ENCODE measurements at regions of chr10 and their contacts with region 1.

Region 1: DNA sequence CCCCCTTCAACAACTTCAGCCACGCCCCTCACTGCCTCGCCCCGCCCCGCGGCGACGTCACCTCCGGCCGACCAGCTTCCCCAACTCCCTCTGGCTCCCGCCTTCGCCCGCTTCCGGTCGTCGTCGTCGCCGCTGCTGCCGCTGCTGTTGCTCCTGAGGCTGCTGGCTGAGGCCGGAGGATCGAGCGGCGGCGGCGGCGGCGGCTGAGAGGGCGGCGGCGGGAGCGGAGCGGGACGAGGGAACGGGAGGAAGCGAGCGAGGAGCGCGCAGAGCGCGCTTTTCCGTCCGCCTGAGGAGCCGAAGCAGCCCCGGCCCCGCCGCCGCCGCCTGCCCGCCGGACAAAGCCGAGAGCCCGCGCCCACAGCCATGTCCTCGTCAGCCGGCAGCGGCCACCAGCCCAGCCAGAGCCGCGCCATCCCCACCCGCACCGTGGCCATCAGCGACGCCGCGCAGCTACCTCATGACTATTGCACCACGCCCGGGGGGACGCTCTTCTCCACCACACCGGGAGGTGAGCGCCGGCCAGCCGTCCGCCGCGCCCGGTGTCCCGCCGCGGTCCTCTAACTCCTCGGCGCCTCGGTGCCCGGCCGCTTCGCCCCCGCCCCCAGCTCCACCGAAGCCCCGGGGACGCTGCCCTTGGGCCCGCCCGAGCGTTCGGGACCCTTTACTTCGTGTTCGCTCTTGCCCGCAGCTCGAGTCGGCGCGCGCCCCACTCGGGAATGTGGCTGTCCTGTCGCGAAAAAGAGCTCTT is at the start of gene EIF4EBP2:
- DNase-seq: peak; percentile 95 to 100 (median 98)
- ATAC-seq: peak; percentile 98
- H3K4me3 ChIP-seq: peak within 1 kb of the TSS; percentile 82
- H3K4me3 Mint-ChIP-seq: peak within 1 kb of the TSS; percentile 91 to 99 (median 96)
- H3K27ac ChIP-seq: peak within 1 kb of the TSS; percentile 86
- H3K27ac Mint-ChIP-seq: peak within 1 kb of the TSS; percentile 88 to 97 (median 94)
- H3K4me1 ChIP-seq: peaks cover 13 to 24% of the 10 kb centered on the region in 2 donors
- H3K4me1 Mint-ChIP-seq: peaks cover 30 to 53% (median 44%) of the 10 kb centered on the region in 7 donors
- H3K27me3 ChIP-seq: no peaks in the 10 kb centered on the region
- H3K27me3 Mint-ChIP-seq: peaks cover 0 to 3% (median 0%) of the 10 kb centered on the region in 5 donors
- total RNA-seq, gene EIF4EBP2: 33.5 to 52.1 (median 45.2) TPM

Region 2: GRCh38 chr10:69327463-69328379 is 1076.5 kb before region 1 on chr10:
- CTCF ChIA-PET with region 1: no interaction called
- POLR2A ChIA-PET with region 1: no interaction called
- intact Hi-C with region 1: loop called in 1 of 2 experiments (anchors 10 kb)
- DNase-seq: peak in 5 of 9 donors; percentile 30 to 42 (median 35)
- ATAC-seq: peak; percentile 90
- H3K4me3 ChIP-seq: peak overlapping the region; percentile 32
- H3K4me3 Mint-ChIP-seq: peak overlapping the region; percentile 76 to 90 (median 82)
- H3K27ac ChIP-seq: peak overlapping the region; percentile 65
- H3K27ac Mint-ChIP-seq: peak overlapping the region; percentile 68 to 96 (median 89)
- H3K4me1 ChIP-seq: peaks cover 16 to 18% of the 10 kb centered on the region in 2 donors
- H3K4me1 Mint-ChIP-seq: peaks cover 46 to 93% (median 73%) of the 10 kb centered on the region in 7 donors
- H3K27me3 ChIP-seq: no peaks in the 10 kb centered on the region
- H3K27me3 Mint-ChIP-seq: no peaks in the 10 kb centered on the region

Region 3: GRCh38 chr10:70169649-70170364 is 234.4 kb before region 1 on chr10:
- CTCF ChIA-PET with region 1: no interaction called
- POLR2A ChIA-PET with region 1: interaction called, 8 read pairs
- intact Hi-C with region 1: loop called (anchors 1 kb)
- DNase-seq: peak in 2 of 9 donors; percentile 8 to 30
- ATAC-seq: peak; percentile 18
- H3K4me3 ChIP-seq: peak overlapping the region; percentile 88
- H3K4me3 Mint-ChIP-seq: peak overlapping the region; percentile 86 to 97 (median 94)
- H3K27ac ChIP-seq: peak overlapping the region; percentile 95
- H3K27ac Mint-ChIP-seq: peak overlapping the region; percentile 83 to 98 (median 96)
- H3K4me1 ChIP-seq: peaks cover 47 to 49% of the 10 kb centered on the region in 2 donors
- H3K4me1 Mint-ChIP-seq: peaks cover 46 to 70% (median 65%) of the 10 kb centered on the region in 7 donors
- H3K27me3 ChIP-seq: no peaks in the 10 kb centered on the region
- H3K27me3 Mint-ChIP-seq: no peaks in the 10 kb centered on the region

Region 4: GRCh38 chr10:70363971-70364771 is 40.0 kb before region 1 on chr10:
- CTCF ChIA-PET with region 1: interaction called, 3 read pairs
- POLR2A ChIA-PET with region 1: no interaction called
- intact Hi-C with region 1: loop called (anchors 2 to 5 kb)
- DNase-seq: peak; percentile 62 to 83 (median 77)
- ATAC-seq: peak; percentile 98
- H3K4me3 ChIP-seq: no peak overlapping the region
- H3K4me3 Mint-ChIP-seq: peak overlapping the region in 5 of 10 donors; percentile 23 to 71 (median 42)
- H3K27ac ChIP-seq: no peak overlapping the region
- H3K27ac Mint-ChIP-seq: peak overlapping the region in 4 of 9 donors; percentile 25 to 50 (median 36)
- H3K4me1 ChIP-seq: peaks cover 0 to 6% of the 10 kb centered on the region in 2 donors
- H3K4me1 Mint-ChIP-seq: peaks cover 7 to 12% (median 9%) of the 10 kb centered on the region in 7 donors
- H3K27me3 ChIP-seq: no peaks in the 10 kb centered on the region
- H3K27me3 Mint-ChIP-seq: peaks cover 0 to 3% (median 0%) of the 10 kb centered on the region in 5 donors

Region 5: DNA sequence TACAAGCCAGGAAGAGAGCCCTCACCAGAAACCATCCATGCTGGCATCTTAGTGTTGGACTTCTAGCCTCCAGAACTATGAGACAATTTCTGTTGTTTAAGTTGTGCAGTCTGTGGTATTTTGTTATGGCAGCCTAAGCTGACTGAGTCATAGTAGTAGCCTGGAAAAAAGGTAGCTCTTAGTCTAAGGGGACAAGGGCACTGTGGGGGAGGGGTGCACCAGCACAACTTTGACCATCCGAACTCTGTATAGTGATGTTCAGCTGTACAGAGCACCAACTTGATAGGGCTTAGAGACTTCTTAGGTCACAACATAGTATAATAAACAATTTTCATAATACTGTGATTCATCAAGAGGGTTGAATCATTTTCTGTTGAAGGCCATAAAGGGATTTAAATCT is 14.0 kb after region 1 on chr10:
- CTCF ChIA-PET with region 1: interaction called, 3 read pairs
- POLR2A ChIA-PET with region 1: interaction called, 13 read pairs
- intact Hi-C with region 1: loop called in 1 of 2 experiments (anchors 2 kb)
- DNase-seq: no peak
- ATAC-seq: no peak
- H3K4me3 ChIP-seq: no peak overlapping the region
- H3K4me3 Mint-ChIP-seq: no peak overlapping the region
- H3K27ac ChIP-seq: no peak overlapping the region
- H3K27ac Mint-ChIP-seq: peak overlapping the region in 7 of 9 donors; percentile 8 to 84 (median 37)
- H3K4me1 ChIP-seq: no peaks in the 10 kb centered on the region
- H3K4me1 Mint-ChIP-seq: peaks cover 19 to 34% (median 31%) of the 10 kb centered on the region in 7 donors
- H3K27me3 ChIP-seq: no peaks in the 10 kb centered on the region
- H3K27me3 Mint-ChIP-seq: no peaks in the 10 kb centered on the region

Region 6: DNA sequence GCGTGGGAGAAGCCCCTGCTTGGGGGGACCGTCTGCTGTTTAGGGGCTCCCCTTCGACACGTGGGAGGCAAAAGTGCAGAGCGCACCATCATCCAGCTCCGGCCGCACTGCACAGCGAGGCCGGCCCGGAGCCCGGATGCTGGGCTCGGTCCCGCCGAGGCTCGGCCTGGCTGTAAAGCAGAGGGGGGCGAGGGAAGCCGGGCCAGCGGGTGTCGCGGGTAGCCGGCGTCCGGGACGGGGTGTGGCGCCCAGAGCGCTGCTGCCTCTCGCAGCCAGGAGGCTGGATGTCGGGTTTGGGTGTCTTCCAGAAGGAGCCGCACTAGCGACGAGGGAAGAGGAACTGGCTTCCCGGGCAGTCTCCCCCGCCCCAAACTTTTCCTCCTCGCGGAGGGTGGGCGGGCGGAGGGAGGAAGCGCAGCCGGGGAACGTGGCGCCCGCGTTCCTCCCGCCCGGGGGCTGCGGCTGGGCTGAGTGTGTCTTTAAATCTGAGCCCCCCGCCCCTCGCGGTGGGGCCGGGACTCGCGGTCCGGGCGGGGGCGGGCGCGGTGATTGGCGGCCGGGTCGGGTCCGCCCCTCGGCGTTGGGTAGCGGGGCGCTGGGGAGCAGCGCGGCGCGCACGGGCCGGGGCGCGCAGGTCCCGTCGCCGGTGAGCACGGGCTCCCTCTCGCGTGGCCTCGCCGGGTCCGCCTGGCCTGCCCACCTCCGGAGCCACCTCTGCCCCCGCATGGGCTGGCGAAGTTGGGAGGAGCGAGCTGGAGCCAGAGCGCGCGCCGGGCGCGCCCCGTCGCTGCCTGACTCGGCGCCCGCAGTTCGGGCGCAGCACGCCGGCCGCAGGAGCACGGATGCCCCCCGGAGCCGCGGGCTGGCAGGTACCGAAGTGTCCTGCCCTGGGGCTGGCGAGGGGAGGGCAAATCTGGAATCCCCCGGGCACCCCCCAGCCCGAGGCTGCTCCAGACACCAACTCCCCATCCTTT is 74.3 kb after region 1 on chr10 and contains the start of gene PALD1:
- CTCF ChIA-PET with region 1: interaction called, 3 read pairs
- POLR2A ChIA-PET with region 1: interaction called, 7 read pairs
- intact Hi-C with region 1: loop called in 1 of 2 experiments (anchors 1 kb)
- DNase-seq: peak in 5 of 9 donors; percentile 13 to 71 (median 24)
- ATAC-seq: no peak
- H3K4me3 ChIP-seq: peak within 1 kb of the TSS; percentile 56
- H3K4me3 Mint-ChIP-seq: peak within 1 kb of the TSS; percentile 78 to 90 (median 84)
- H3K27ac ChIP-seq: peak within 1 kb of the TSS; percentile 33
- H3K27ac Mint-ChIP-seq: peak within 1 kb of the TSS; percentile 56 to 93 (median 75)
- H3K4me1 ChIP-seq: peaks cover 29 to 51% of the 10 kb centered on the region in 2 donors
- H3K4me1 Mint-ChIP-seq: peaks cover 28 to 65% (median 56%) of the 10 kb centered on the region in 7 donors
- H3K27me3 ChIP-seq: peaks cover 0 to 4% of the 10 kb centered on the region in 2 donors
- H3K27me3 Mint-ChIP-seq: peaks cover 0 to 74% (median 0%) of the 10 kb centered on the region in 5 donors
- total RNA-seq, gene PALD1: 0.08 to 0.39 (median 0.19) TPM

Region 7: GRCh38 chr10:70887804-70888800 is 483.9 kb after region 1 on chr10 and contains the start of gene PCBD1:
- CTCF ChIA-PET with region 1: no interaction called
- POLR2A ChIA-PET with region 1: no interaction called
- intact Hi-C with region 1: loop called (anchors 1 to 10 kb)
- DNase-seq: peak; percentile 36 to 78 (median 63)
- ATAC-seq: peak; percentile 93
- H3K4me3 ChIP-seq: peak within 1 kb of the TSS; percentile 73
- H3K4me3 Mint-ChIP-seq: peak within 1 kb of the TSS; percentile 84 to 89 (median 88)
- H3K27ac ChIP-seq: peak within 1 kb of the TSS; percentile 74
- H3K27ac Mint-ChIP-seq: peak within 1 kb of the TSS; percentile 53 to 91 (median 78)
- H3K4me1 ChIP-seq: peaks cover 4 to 10% of the 10 kb centered on the region in 2 donors
- H3K4me1 Mint-ChIP-seq: peaks cover 0 to 25% (median 8%) of the 10 kb centered on the region in 7 donors
- H3K27me3 ChIP-seq: no peaks in the 10 kb centered on the region
- H3K27me3 Mint-ChIP-seq: no peaks in the 10 kb centered on the region
- total RNA-seq, gene PCBD1: 4.5 to 29.8 (median 8.3) TPM

Measured in naive thymus-derived CD4-positive, alpha-beta T cell (primary cell).